ENCODE measurements at regions of chr1 and their contacts with region 1.

Region 1: DNA sequence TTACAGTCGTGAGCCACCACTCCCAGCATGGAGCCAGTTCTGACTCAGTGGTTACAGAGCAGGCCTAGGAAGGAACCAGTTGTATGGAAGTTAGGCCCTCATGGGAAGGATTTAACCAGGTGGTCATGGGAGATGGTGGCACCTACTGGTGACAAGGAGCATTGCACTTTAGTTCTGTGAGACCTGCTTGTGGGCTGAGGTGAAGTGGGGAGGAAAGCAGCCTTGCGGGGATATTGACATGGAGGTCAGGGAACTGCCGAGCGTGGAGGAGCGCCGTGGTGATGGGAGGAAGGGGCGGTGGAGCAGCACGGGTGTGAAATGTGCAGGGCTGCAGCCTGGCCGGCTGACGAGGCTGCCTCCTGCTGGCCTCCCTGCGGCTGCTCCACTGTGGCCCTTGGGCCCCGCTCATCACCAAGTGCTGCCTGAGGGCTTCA is 100.4 kb downstream of the GALNT2 start:
- DNase-seq: peak; percentile 18
- H3K4me3 Mint-ChIP-seq: no peak overlapping the region
- H3K27ac Mint-ChIP-seq: no peak overlapping the region
- H3K4me1 Mint-ChIP-seq: peaks cover 30% of the 10 kb centered on the region
- H3K27me3 Mint-ChIP-seq: no peaks in the 10 kb centered on the region

Region 2: DNA sequence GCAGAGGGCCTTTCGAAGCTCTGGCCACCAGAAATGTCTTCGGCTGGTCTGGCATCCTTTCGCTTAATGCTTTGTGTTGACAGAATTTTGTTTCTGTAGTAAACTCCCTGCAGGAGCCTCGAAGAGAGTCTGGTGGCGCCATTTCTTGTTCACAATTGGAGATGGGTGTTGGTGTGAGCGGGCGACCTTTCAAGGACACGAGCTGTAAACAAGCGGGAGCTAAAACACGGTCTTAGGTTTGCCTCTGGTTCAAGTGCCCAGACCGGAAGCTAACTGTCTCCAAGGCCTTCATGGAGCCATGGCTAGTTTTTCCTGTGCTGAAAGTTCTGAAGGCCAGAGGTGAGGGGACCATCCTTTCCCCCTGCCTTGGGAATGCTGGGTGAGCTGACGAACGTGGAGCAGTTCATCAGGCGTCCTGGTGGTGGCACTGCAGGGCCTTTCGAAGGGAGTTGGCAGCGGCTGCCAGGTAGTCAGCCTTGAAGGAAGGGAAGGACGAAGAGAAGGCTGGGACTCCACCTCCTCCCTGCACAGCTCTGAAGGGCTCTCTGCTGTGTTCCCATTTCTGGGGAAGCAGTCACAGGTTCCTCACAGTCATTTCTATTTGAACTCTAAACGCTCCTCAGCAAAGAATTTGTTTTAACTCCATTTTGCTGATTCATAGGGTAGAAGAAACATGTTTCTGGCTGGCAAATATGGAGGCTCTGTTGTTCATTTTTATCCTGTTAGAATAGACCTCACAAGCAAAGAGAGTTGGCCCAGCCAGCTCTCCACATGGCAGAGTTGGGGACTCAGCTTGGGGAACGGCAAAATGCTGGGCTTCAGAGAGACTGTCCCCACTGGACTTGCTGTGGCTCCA is 506.2 kb before region 1 on chr1:
- intact Hi-C with region 1: loop called (anchors 1 kb)
- DNase-seq: peak; percentile 41
- H3K4me3 Mint-ChIP-seq: no peak overlapping the region
- H3K27ac Mint-ChIP-seq: no peak overlapping the region
- H3K4me1 Mint-ChIP-seq: peaks cover 10% of the 10 kb centered on the region
- H3K27me3 Mint-ChIP-seq: peaks cover 2% of the 10 kb centered on the region

Region 3: DNA sequence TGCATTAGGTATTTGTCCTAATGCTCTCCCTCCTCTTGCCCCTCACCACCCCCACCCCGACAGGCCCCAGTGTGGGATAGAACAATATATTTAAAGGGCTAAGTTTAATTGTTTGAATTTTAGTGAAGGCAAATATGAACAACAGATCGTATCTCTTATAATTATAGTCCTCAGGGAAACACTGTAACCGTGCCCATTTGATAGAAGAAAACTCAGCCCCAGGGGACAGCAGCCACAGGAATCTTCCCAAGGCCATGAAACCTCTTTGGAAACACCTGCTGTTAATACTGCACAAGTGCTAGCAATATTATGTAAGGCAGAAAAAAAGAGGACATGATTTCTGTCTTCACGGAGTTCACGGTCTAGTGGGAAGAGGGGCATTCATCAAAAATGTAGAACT is 399.2 kb before region 1 on chr1:
- intact Hi-C with region 1: no loop called
- DNase-seq: no peak
- H3K4me3 Mint-ChIP-seq: no peak overlapping the region
- H3K27ac Mint-ChIP-seq: no peak overlapping the region
- H3K4me1 Mint-ChIP-seq: no peaks in the 10 kb centered on the region
- H3K27me3 Mint-ChIP-seq: peaks cover 24% of the 10 kb centered on the region

Region 4: GRCh38 chr1:230109895-230110667 is 57.4 kb before region 1 on chr1:
- intact Hi-C with region 1: loop called (anchors 2 kb)
- DNase-seq: peak; percentile 56
- H3K4me3 Mint-ChIP-seq: peak overlapping the region; percentile 23
- H3K27ac Mint-ChIP-seq: peak overlapping the region; percentile 88
- H3K4me1 Mint-ChIP-seq: peaks cover 78% of the 10 kb centered on the region
- H3K27me3 Mint-ChIP-seq: no peaks in the 10 kb centered on the region

Region 5: DNA sequence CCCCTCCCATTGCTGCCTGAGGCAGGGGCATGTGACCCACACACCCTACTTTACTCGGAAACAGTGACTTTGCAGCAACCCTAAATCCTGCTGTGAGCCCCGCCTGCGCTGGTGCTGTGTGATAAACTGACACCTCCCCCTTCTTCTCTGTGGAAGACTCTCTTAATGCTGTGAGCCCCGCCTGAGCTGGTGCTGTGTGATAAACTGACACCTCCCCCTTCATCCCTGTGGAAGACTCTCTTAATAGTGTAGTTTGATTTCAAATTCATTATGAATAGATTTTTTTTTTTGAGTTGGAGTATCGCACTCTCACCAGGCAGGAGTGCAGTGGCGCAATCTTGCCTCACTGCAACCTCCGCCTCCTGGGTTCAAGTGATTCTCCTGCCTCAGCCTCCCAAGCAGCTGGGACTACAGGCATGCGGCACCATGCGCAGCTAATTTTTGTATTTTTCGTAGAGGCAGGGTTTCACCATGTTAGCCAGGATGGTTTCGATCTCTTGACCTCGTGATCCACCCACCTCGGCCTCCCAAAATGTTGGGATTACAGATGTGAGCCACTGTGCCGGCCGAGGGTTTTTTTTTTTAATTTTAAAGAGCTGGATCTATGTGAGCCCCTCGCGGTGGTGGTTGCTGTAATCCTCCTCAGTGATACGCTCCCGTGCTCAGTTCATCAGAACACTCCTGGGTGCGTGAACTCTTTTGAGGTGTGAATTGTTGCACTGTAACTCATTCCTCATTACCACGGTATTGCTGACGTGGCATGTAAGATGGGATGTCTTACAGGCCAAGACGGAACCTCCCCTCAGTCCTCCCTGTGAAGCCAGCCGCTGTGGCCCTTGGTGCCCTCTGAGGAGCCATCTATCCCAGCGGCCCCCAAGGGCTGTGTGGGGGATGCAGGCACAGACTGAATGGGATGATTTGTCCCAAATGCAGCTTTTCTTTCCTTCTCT is 40.1 kb before region 1 on chr1:
- intact Hi-C with region 1: loop called (anchors 5 kb)
- DNase-seq: peak; percentile 47
- H3K4me3 Mint-ChIP-seq: peak overlapping the region; percentile 53
- H3K27ac Mint-ChIP-seq: peak overlapping the region; percentile 70
- H3K4me1 Mint-ChIP-seq: peaks cover 62% of the 10 kb centered on the region
- H3K27me3 Mint-ChIP-seq: no peaks in the 10 kb centered on the region

Region 6: DNA sequence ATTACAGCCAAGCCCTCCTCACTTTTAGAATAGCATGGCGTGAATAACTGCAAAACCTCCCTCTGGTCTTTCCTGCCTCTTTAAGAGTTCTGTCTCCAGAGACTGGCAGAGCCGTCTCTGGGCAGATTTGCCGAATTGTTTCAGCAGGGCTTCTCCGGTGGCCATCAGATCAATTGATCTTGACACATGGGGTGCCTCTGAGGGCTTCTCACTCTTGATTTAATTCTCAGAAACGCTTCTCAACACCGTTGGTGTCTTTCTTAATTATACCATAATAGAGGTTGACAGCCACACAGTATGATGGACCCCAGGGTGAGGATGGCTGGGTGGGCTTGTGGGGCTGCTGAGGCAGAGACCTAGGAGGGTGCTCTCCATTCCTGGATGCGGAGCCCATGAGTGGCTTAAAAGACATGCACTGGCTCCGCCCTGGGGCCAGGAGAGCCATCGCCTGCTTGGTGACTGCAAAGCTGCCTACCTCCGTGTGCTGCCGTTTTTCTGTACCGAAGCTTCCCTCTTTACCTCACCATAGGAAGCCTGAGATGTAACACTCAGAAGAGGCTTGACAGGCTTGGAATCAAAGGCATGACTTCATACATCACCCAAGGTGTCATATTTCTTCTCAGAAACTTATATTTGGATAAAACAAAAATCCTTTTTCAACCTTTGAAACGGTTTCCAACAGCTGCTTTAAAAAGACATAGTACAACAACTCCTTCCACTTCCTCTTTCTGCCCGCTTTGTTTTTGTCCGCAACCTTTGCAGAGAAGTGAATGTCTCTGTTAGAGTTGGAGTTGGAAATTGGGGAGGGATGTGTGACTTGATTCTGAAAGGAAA is 17.5 kb before region 1 on chr1:
- intact Hi-C with region 1: no loop called
- DNase-seq: no peak
- H3K4me3 Mint-ChIP-seq: no peak overlapping the region
- H3K27ac Mint-ChIP-seq: no peak overlapping the region
- H3K4me1 Mint-ChIP-seq: peaks cover 16% of the 10 kb centered on the region
- H3K27me3 Mint-ChIP-seq: no peaks in the 10 kb centered on the region

Region 7: DNA sequence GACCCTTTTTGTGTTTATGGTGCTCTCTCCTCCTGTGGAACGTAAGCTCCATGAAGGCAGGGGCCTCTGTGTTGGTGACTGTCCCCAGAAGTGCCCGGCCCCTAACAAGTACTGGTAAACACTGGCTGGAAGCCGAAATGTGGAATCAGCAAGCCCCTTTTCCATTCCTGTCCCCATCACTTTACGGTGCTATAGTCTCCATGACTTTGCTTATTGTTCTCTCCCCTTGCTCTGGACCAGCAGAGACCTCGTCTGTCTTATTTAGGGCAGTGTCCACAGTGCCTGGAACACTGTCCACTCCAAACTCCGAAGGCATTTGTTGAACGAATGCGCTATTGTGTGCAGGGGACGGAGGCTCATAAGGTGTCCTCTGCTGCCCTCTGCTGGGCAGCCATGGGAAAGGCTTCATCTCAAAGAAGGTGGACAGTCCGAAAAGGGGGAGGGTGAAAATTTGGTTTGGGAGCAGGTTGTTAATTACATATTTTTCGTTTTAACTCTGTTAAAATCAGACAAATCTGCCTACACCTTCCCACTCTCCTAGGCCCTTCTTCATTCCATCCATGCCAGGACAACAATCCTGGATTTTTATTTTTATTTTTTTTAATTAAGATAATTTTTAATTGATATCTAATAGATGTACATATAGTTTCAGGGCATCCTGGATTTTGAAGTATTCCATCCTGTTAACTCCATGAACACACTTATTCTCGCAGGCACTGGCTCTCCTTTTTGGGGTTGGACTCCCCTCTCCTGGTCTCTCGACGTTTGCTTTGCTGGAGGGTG is 143.1 kb after region 1 on chr1:
- intact Hi-C with region 1: loop called (anchors 5 kb)
- DNase-seq: peak; percentile 34
- H3K4me3 Mint-ChIP-seq: no peak overlapping the region
- H3K27ac Mint-ChIP-seq: no peak overlapping the region
- H3K4me1 Mint-ChIP-seq: peaks cover 11% of the 10 kb centered on the region
- H3K27me3 Mint-ChIP-seq: peaks cover 3% of the 10 kb centered on the region

Measured in activated T-helper 2 cell treated with anti-CD3 and anti-CD28 coated beads, Interferon-gamma antibody, Interleukin-2, Interleukin-4, amounts not matched to agents 10 μg/mL and 5 μg/mL and 100 μg/mL, durations not matched to agents 14 hours and 24 hours and 36 hours (primary cell).